HEK293T (cell line): ENCODE measurements at regions of chr12 and their contacts with region 1.

Region 1: GRCh38 chr12:12683725-12684124 is 12.3 kb downstream of the GPR19 start:
- DNase-seq: no peak

Region 2: DNA sequence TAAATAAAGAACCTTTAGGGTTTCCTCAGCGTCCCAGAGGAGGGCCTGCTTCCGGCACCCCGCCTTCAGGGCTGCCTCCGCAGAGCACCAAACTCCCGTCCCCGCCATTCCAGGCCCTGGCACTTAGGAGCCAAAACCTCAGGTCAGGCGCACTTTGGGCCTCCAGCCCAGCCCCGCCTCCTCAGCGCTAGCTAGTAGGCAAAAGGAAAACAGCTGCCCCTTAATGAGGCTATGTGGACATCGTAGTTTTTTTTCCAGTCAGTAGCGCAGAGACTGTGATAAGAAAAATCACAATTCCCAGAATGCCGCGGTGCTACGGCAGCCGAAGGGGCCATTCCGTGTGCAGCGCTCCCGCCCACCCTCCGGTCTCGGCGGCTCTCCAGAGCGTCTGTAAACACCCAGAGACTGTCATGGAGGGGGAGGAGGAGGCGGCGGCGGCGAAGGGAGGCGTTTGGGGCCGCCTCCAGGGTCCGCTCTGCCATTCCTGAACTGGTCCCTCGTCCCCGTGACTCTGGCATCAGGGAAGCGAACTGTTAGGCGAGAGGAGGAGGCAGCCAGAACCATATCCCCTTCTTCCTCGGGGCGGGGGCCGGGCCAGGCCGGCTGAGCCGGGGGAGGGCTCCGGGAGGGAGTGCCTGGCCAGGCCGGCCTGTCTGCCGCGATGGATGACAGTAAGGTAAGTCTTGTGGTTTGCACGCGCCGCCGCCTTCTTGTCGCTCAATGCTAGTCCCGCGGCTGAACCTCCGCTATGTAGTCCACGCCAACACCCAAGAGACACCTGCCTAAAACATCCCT is 72.0 kb before region 1 on chr12 and contains the start of gene CREBL2:
- CTCF ChIA-PET with region 1: no interaction called
- POLR2A ChIA-PET with region 1: no interaction called
- DNase-seq: peak; percentile 85

Region 3: GRCh38 chr12:12696562-12697383 is 13.0 kb after region 1 on chr12:
- CTCF ChIA-PET with region 1: no interaction called
- POLR2A ChIA-PET with region 1: interaction called, 16 read pairs
- DNase-seq: peak; percentile 50

Region 4: DNA sequence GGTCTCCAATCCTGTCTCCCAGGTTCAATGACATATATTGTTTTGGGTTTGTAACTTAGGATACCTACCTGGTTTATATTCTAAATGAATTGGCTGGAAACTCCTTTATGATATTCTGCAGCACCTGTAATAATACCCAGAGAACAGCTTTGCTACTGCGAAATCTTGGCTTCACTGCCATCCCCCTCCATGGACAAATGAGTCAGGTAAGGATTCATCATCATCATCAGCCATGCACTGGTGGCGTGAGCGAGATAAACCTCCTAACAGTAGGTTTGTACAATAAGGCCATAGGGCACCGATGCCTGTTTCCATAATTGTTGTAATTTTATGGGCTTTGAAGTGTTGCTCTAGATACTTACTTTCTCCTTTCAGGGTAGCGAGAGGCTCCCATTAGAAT is 140.1 kb after region 1 on chr12:
- CTCF ChIA-PET with region 1: no interaction called
- POLR2A ChIA-PET with region 1: no interaction called
- DNase-seq: no peak